Activated naive CD4-positive, alpha-beta T cell treated with anti-CD3 and anti-CD28 coated beads for 36 hours (primary cell): ENCODE measurements at regions of chr16 and their contacts with region 1.

Region 1: DNA sequence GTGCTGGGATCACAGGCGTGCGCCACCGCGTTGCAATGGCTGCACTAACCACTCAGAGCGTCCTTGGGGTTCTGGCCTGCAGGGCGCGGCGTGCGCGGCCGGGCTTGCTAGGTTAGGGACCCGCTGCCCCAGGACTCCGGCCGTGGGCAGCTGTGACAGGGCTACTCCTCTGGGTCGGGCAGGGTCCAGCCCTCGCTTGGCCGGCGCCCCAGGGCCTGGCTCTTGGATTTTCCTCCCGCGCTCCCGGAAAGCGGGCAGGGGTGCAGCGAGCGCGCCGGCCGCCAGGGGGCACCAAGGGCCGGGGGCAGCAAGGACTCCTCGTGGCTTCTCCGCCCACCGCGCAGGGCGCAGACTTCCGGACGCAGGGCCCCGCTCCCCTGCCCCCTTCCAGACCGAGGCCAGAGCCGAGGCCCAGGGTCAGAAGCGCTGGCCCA is 489 bp downstream of the TLE7 start:
- DNase-seq: peak; percentile 38
- H3K4me3 Mint-ChIP-seq: no peak overlapping the region
- H3K27ac Mint-ChIP-seq: no peak overlapping the region
- H3K4me1 Mint-ChIP-seq: no peaks in the 10 kb centered on the region
- H3K27me3 Mint-ChIP-seq: peaks cover 29% of the 10 kb centered on the region

Region 2: GRCh38 chr16:71499775-71500364 is 58.5 kb after region 1 on chr16:
- CTCF ChIA-PET with region 1: interaction called, 18 read pairs
- intact Hi-C with region 1: loop called (anchors 2 kb)
- DNase-seq: peak; percentile 71
- H3K4me3 Mint-ChIP-seq: no peak overlapping the region
- H3K27ac Mint-ChIP-seq: no peak overlapping the region
- H3K4me1 Mint-ChIP-seq: no peaks in the 10 kb centered on the region
- H3K27me3 Mint-ChIP-seq: no peaks in the 10 kb centered on the region